ENCODE measurements at regions of chr6 and their contacts with region 1.

Region 1: DNA sequence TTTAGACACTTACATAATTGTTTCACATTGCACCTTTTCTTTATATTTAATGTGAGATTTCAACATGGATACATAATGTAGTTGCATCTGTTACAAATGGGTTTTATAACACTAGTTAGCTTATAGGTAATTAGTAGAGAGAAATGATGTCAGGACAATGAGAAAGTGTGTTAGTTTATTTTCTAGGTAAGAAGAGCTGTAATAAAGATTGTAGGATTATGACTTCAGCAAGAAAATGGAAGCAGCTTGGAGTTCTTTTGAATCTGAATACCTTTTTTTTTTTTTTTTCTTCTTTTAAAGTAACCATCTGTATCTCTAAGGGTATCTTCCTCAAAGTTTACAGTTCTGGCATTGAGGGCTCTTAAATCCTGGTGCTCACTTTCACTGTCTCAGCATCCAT is 35.3 kb downstream of the CD2AP start:
- DNase-seq: no peak
- H3K4me3 ChIP-seq: no peak overlapping the region
- H3K27ac ChIP-seq: no peak overlapping the region
- H3K4me1 ChIP-seq: no peaks in the 10 kb centered on the region
- H3K27me3 ChIP-seq: no peaks in the 10 kb centered on the region
- CTCF ChIP-seq: no peak

Region 2: GRCh38 chr6:47375426-47375825 is 137.4 kb before region 1 on chr6:
- CTCF ChIA-PET with region 1: no interaction called
- POLR2A ChIA-PET with region 1: no interaction called
- intact Hi-C with region 1: no loop called
- DNase-seq: no peak
- H3K4me3 ChIP-seq: no peak overlapping the region
- H3K27ac ChIP-seq: no peak overlapping the region
- H3K4me1 ChIP-seq: no peaks in the 10 kb centered on the region
- H3K27me3 ChIP-seq: no peaks in the 10 kb centered on the region
- CTCF ChIP-seq: no peak

Region 3: GRCh38 chr6:47477497-47478232 is 35.2 kb before region 1 on chr6 and contains the start of gene CD2AP:
- CTCF ChIA-PET with region 1: no interaction called
- POLR2A ChIA-PET with region 1: interaction called, 24 read pairs
- intact Hi-C with region 1: no loop called
- DNase-seq: peak; percentile 80 to 85
- H3K4me3 ChIP-seq: peak within 1 kb of the TSS; percentile 95
- H3K27ac ChIP-seq: peak within 1 kb of the TSS; percentile 97
- H3K4me1 ChIP-seq: peaks cover 38% of the 10 kb centered on the region
- H3K27me3 ChIP-seq: no peaks in the 10 kb centered on the region
- CTCF ChIP-seq: no peak; the same call in 1 of the 2 replicates
- total RNA-seq, gene CD2AP: 48.8 and 55.5 TPM in 2 replicates

Measured in PC-9 (cell line).